GM10248 (cell line): ENCODE measurements at regions of chr15 and their contacts with region 1.

Region 1: GRCh38 chr15:43510200-43511011 is 7.0 kb upstream of the MAP1A start:
- DNase-seq: peak; percentile 98
- CTCF ChIP-seq: no peak

Region 2: GRCh38 chr15:43370975-43371974 is 139.1 kb before region 1 on chr15 and contains the starts of genes TUBGCP4 and ZSCAN29:
- CTCF ChIA-PET with region 1: interaction called, 11 read pairs
- POLR2A ChIA-PET with region 1: no interaction called
- DNase-seq: peak; percentile 96
- CTCF ChIP-seq: peak; percentile 49

Region 3: GRCh38 chr15:43492673-43493601 is 17.5 kb before region 1 on chr15 and contains the start of gene TP53BP1:
- CTCF ChIA-PET with region 1: interaction called, 24 read pairs
- POLR2A ChIA-PET with region 1: no interaction called
- DNase-seq: peak; percentile 96
- CTCF ChIP-seq: no peak

Region 4: GRCh38 chr15:43524254-43524845 is 13.9 kb after region 1 on chr15:
- CTCF ChIA-PET with region 1: interaction called, 41 read pairs
- POLR2A ChIA-PET with region 1: no interaction called
- DNase-seq: no peak
- CTCF ChIP-seq: no peak

Region 5: GRCh38 chr15:43541785-43542184 is 31.4 kb after region 1 on chr15:
- CTCF ChIA-PET with region 1: interaction called, 15 read pairs
- POLR2A ChIA-PET with region 1: no interaction called
- DNase-seq: no peak
- CTCF ChIP-seq: no peak